ENCODE measurements at regions of chr5 and their contacts with region 1.

Region 1: GRCh38 chr5:169980418-169981053 is at the start of gene INSYN2B:
- DNase-seq: peak; percentile 63
- H3K4me3 ChIP-seq: peak within 1 kb of the TSS; percentile 43
- H3K27me3 ChIP-seq: no peaks in the 10 kb centered on the region
- CTCF ChIP-seq: peak; percentile 59
- polyA plus RNA-seq, gene INSYN2B: 2.0 and 2.4 TPM in 2 replicates

Region 2: GRCh38 chr5:169701910-169702451 is 278.6 kb before region 1 on chr5:
- CTCF ChIA-PET with region 1: interaction called, 38 read pairs
- POLR2A ChIA-PET with region 1: no interaction called
- DNase-seq: no peak
- H3K4me3 ChIP-seq: no peak overlapping the region
- H3K27me3 ChIP-seq: no peaks in the 10 kb centered on the region
- CTCF ChIP-seq: peak; percentile 62

Region 3: DNA sequence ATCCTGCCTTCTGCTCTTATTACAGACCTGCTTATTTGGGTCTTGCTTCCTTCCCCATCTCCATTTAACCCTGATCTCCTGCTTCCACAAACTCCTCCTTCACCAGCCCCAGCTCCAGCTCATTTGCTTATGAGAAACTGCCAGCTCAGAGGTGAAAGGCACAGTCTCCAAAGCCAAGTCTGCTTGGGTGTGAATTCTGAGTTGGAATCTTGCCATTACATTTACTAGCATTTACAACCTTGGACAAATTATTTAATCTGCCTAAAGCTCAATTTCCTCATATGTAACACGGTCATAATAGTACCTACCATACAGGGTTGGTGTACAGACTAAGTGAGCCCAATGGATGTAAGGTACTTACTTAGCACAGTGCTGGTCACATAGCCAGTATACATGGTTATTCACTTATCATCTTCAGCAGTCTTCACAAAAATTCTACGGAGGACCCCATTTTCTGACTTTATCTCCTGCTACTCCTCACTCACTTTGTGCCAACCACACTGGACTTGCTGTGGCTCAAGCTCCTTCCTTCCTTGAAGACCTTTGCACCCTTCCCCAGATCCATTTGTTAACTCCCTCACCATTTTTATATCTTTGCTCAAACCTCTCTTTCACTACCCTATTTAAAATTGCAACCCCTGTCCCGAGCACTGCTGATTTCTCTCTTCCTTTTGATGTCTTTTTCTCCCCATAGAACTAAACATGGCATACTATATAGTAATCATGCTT is 257.3 kb before region 1 on chr5:
- CTCF ChIA-PET with region 1: interaction called, 10 read pairs
- POLR2A ChIA-PET with region 1: no interaction called
- DNase-seq: no peak
- H3K4me3 ChIP-seq: no peak overlapping the region
- H3K27me3 ChIP-seq: no peaks in the 10 kb centered on the region
- CTCF ChIP-seq: no peak

Region 4: DNA sequence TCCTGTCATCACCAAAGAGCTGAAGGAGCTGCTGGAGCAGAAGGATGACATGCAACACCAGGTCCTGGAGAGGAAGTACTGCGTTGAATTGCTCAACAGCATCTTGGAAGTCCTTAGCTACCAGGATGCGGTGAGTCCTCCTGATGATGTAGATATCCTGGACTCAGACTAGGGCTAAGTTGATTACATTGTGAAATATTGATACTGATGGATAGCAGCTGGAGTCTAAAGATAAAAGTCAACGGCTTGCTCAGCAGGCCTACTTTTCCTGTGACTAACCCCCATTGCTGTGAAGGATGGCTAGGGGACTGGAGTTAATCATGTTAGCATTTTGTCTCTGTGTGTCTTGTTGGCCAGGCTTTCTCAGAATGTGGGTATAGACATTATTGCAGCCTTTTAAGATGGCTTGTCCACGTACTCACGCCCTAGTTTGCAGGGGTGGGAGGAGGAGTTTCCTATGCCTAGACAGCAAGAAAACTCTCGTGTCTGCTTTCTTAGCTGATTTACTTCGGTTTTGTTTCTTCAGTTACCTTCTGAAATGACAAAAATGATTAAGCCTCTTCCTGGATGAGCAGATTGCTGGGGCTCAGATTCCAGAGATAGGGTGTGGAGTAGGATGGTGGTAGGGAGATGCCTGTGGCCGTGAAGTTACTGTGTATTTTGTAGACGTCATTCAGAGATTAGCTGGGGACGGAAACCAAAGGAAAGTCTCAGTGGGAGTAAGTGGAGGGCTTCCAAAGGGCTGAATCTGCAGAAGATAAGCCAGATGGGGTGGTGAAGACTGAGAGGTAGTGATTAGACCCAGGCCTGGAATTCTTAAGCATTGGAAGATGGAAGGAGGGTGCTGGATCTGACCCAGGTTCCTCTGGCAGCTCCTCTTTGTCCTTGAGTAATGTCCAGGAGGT is 177.2 kb before region 1 on chr5:
- CTCF ChIA-PET with region 1: interaction called, 10 read pairs
- POLR2A ChIA-PET with region 1: no interaction called
- DNase-seq: peak; percentile 89
- H3K4me3 ChIP-seq: 0 out of 2 replicates have a peak overlapping the region, but pooled peaks have one; percentile 4
- H3K27me3 ChIP-seq: no peaks in the 10 kb centered on the region
- CTCF ChIP-seq: no peak

Region 5: DNA sequence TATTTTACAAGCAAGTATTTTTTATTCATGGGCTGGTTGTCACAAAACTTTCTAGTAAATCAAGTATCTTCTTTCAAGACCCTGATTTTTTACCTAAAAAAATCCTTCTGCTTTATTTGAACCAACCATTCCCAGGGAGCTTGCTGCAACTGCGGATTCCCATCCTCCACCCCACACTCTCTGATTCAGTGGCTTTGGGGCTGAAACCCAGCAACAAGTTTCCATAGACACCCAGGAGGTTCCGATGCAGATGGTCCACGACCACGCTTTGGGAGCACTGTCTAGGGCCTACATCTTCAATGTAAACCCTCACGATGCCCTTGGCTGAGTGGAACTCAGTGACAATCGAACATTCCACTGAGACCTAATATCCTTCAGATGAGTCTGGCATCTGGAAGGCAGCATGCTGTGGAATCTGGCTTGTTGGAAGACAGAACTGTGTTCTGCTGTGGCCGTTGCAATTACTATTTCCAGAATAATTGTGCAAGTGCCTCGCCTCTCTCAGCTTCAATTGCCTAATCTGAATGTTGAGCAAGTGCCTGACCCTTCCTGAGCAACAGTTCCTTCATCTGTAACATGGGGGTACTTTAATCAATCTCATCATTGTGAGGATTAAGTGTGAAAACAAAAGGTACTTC is 105.3 kb before region 1 on chr5:
- CTCF ChIA-PET with region 1: interaction called, 17 read pairs
- POLR2A ChIA-PET with region 1: no interaction called
- DNase-seq: peak; percentile 30
- H3K4me3 ChIP-seq: no peak overlapping the region
- H3K27me3 ChIP-seq: no peaks in the 10 kb centered on the region
- CTCF ChIP-seq: no peak

Region 6: GRCh38 chr5:169934990-169935389 is 45.5 kb before region 1 on chr5:
- CTCF ChIA-PET with region 1: interaction called, 14 read pairs
- POLR2A ChIA-PET with region 1: no interaction called
- DNase-seq: no peak
- H3K4me3 ChIP-seq: no peak overlapping the region
- H3K27me3 ChIP-seq: no peaks in the 10 kb centered on the region
- CTCF ChIP-seq: no peak

Region 7: DNA sequence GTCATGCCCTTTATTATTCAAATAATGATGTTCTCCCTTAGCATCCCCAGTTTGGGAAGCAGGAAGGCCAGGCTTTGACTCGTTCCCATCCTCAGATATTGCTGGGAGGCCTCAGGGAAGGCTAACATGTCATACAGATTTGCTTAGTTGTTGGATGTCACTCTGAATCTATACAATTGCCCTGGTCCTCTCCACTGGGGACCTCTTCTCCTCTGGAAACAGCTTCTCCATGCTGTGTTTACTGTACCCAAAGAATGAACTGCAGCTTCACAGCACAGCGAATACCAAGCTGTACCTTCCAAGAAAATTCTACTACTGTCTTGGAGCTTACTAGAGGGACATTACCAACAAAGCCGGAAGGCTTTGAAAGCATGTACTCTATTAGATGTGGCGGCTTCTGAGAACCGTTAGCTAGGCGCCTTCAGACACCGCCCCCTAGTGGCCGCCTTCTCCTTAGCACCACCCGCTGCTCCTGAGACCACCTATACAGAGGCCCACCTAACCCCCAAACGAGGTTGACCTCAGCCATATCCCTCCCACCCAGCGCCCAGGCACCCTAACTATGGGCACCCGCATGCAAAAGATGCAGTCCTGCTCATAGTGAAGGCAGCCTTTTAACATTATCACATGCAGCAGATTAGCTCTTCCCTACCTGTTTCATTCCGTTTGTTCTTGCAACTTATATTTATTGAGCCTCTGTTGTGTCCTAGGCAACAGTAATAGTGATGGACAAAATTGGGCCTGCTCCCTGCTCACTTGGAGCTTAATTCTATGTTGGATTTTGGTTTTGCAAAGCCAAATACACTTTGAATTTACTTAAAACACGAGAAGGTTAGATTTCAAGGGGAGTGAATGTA is 90.2 kb after region 1 on chr5:
- CTCF ChIA-PET with region 1: interaction called, 18 read pairs
- POLR2A ChIA-PET with region 1: no interaction called
- DNase-seq: no peak
- H3K4me3 ChIP-seq: no peak overlapping the region
- H3K27me3 ChIP-seq: no peaks in the 10 kb centered on the region
- CTCF ChIP-seq: peak; percentile 85

Region 8: DNA sequence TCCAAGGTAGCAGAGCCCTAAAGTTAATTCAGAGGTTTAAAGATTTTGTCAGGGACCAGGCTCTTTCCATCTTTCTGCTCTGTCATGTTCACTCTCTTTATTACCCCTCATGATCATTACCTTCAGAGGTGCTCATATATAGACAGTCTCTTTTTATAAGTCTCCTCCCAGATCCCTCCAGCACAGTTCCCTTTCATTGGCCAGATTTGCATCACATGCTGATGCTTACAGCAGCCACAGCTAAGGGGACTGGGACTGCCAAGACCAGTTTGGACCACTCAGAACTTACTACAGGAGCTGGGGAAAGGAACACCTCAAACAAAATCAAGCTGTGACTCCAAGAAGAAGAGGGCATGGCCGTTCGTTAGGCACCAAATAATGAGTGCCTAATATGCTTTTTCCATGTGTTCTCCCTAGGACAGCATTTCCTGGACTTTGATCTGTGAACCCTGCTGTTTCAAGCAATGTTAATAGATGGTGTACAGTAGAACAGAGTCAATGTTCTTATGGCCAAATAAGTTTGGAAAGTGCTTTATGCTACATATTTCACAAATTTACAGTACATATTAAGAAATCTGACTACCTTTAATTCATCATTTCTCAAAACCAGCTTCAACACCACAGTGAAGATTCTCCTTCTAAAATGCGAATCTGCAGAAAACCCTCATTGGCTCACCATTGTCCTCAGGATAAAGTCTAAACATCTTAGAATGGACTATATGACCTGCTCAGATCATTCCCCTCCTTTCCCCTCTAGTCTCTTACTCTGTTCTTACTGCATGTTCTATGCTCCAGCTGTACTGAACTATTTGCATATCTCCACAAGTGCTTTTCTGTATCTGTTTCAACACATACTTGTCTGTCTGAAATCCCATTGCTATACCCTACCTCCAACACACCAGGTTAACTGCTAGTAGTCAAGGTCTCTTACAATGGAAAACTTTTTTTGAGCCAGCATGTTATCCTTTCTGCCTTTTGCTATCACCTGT is 255.6 kb after region 1 on chr5:
- CTCF ChIA-PET with region 1: no interaction called
- POLR2A ChIA-PET with region 1: no interaction called
- DNase-seq: no peak
- H3K4me3 ChIP-seq: no peak overlapping the region
- H3K27me3 ChIP-seq: no peaks in the 10 kb centered on the region
- CTCF ChIP-seq: no peak

Measured in BJ (cell line).